Aorta (tissue), 5 donors: ENCODE measurements at regions of chr14 and their contacts with region 1.

Region 1: GRCh38 chr14:71320107-71320733 is 413.0 kb downstream of the PCNX1 start:
- DNase-seq: peak; percentile 99 to 100
- ATAC-seq: peak; percentile 97
- H3K4me3 ChIP-seq: peak within 1 kb of the TSS; percentile 92 to 98
- H3K27ac ChIP-seq: peak within 1 kb of the TSS; percentile 83 to 94
- H3K4me1 ChIP-seq: no peaks in the 10 kb centered on the region
- H3K27me3 ChIP-seq: no peaks in the 10 kb centered on the region

Region 2: GRCh38 chr14:71138448-71139293 is 181.5 kb before region 1 on chr14:
- intact Hi-C with region 1: loop called in 1 of 2 experiments (anchors 5 kb)
- DNase-seq: peak; percentile 59 to 83
- ATAC-seq: peak; percentile 82
- H3K4me3 ChIP-seq: no peak overlapping the region
- H3K27ac ChIP-seq: no peak overlapping the region
- H3K4me1 ChIP-seq: no peaks in the 10 kb centered on the region
- H3K27me3 ChIP-seq: no peaks in the 10 kb centered on the region

Region 3: DNA sequence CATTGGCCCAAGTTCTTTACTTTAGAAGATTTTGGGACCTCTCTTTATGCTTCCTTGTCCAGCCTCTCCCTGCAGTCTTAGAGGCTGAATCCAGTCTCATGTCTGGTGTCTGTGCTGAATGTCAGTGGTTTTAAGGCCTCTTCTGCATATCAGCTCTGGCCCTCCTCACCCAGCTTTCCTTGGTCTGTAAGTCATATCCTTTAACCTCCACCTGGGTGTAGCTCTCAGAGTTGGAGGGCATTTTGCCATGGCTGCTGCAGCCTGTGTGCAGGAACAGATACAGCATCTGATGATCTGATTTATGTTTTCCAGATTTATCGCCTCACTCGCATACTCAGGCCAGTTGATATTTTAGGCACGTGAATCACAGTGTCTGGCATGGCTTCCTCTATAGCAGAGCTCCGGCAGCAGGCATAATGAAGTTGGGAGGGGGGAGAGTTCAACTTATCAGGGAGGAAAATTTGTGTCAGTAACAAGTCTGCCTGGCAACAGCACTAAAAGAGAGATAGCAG is 77.9 kb before region 1 on chr14:
- intact Hi-C with region 1: no loop called
- DNase-seq: peak in 1 of 2 donors; percentile 77
- ATAC-seq: peak; percentile 76
- H3K4me3 ChIP-seq: no peak overlapping the region
- H3K27ac ChIP-seq: peak overlapping the region; percentile 46 to 89
- H3K4me1 ChIP-seq: peaks cover 5 to 9% of the 10 kb centered on the region in 2 donors
- H3K27me3 ChIP-seq: no peaks in the 10 kb centered on the region

Region 4: GRCh38 chr14:71355324-71356201 is 35.3 kb after region 1 on chr14:
- intact Hi-C with region 1: loop called in 1 of 2 experiments (anchors 5 kb)
- DNase-seq: no peak
- ATAC-seq: peak; percentile 81
- H3K4me3 ChIP-seq: no peak overlapping the region
- H3K27ac ChIP-seq: peak overlapping the region in 1 of 2 donors; percentile 63
- H3K4me1 ChIP-seq: peaks cover 5 to 10% of the 10 kb centered on the region in 2 donors
- H3K27me3 ChIP-seq: no peaks in the 10 kb centered on the region

Region 5: DNA sequence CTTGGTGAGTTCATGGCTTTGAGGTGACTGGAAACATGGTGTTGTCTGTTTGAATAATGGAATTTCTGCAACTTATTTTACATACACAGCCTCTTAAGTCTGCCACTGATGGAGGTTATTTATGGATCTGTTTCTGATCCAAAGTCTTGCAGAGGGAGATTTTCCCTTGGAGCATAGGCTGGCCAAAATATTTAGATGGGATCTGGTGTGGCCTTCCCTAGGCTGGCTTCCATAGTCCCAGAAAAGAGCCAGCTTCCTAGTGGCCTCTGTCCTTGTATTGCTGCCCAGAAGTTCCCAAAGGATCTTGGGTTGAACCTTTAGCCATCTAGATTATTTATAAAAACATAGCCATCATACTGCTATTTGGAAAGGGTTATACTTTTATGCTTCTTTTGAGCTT is 120.9 kb after region 1 on chr14:
- intact Hi-C with region 1: loop called in 1 of 2 experiments (anchors 5 kb)
- DNase-seq: no peak
- ATAC-seq: peak; percentile 76
- H3K4me3 ChIP-seq: no peak overlapping the region
- H3K27ac ChIP-seq: peak overlapping the region in 1 of 2 donors; percentile 59
- H3K4me1 ChIP-seq: peaks cover 0 to 2% of the 10 kb centered on the region in 2 donors
- H3K27me3 ChIP-seq: no peaks in the 10 kb centered on the region

Region 6: GRCh38 chr14:71586131-71586897 is 266.1 kb after region 1 on chr14:
- intact Hi-C with region 1: loop called in 1 of 2 experiments (anchors 10 kb)
- DNase-seq: peak in 1 of 2 donors; percentile 44
- ATAC-seq: peak; percentile 74
- H3K4me3 ChIP-seq: peak overlapping the region; percentile 38 to 94
- H3K27ac ChIP-seq: peak overlapping the region in 1 of 2 donors; percentile 82
- H3K4me1 ChIP-seq: peaks cover 0 to 2% of the 10 kb centered on the region in 2 donors
- H3K27me3 ChIP-seq: no peaks in the 10 kb centered on the region

Region 7: DNA sequence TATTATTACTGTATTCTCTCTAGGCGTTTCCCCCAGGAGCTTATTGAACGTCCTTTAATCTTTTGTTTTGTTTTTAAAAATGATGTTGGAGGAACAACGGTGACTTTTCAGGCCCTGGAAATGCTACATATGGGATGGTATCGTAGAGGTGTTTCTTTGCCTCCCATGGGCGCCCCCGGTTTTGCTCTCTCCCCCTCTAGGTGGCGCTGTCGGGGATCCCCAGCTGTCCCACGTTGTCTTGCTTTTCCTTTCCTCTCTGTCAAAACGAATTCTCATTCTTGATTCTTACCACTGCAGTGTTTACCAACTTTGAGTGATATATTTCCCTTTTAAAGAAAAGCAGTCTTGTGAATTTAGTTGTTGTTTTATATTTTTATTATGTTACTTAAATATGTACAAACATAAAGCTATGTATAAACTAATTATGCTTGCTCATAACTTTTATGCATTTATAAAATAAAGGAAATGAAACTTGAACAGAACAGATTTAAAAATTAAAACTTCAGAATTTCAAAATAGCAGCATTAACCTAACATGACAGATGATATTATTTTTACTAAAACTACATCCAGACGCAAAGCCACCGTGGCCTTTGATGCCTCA is 783.9 kb after region 1 on chr14:
- intact Hi-C with region 1: no loop called
- DNase-seq: no peak
- ATAC-seq: no peak
- H3K4me3 ChIP-seq: no peak overlapping the region
- H3K27ac ChIP-seq: no peak overlapping the region
- H3K4me1 ChIP-seq: no peaks in the 10 kb centered on the region
- H3K27me3 ChIP-seq: no peaks in the 10 kb centered on the region